ENCODE measurements at regions of chr7 and their contacts with region 1.

Region 1: DNA sequence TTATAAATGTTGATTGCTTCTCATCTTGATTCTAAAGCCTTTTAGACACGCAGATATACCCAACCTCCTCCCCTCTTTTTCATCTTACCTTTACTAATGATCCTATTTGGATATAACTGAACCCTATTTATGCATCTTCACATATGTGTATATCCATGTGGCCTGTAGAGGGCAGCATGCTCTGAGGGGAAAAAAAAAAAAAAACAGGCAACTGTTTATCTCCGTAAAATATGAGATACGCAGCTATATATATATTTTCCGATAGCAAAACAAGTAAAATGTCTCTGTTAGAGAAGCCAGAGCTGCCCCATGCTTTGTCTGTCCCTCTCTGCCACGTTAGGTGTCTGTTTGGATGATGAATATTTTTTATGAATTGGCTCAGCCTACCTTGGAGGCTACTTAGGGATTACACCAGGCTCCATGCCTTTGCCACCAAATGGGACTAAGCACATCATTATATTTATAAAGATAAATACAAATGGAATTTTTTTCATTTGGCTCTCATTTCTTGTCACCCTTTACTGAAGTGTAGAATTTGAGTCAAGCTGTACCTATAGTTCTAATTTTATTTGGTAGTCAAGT is 174.8 kb upstream of the FZD1 start:
- DNase-seq: peak in 1 of 2 donors; percentile 4
- H3K4me3 ChIP-seq: peak overlapping the region in 1 of 3 donors; percentile 19
- H3K27ac ChIP-seq: no peak overlapping the region
- H3K4me1 ChIP-seq: peaks cover 4 to 8% of the 10 kb centered on the region in 2 donors
- H3K27me3 ChIP-seq: no peaks in the 10 kb centered on the region
- CTCF ChIP-seq: peak; percentile 46 to 80 (median 64)
- POLR2A ChIP-seq: no peak

Region 2: GRCh38 chr7:91126762-91127161 is 37.3 kb after region 1 on chr7:
- intact Hi-C with region 1: no loop called
- DNase-seq: no peak
- H3K4me3 ChIP-seq: no peak overlapping the region
- H3K27ac ChIP-seq: no peak overlapping the region
- H3K4me1 ChIP-seq: no peaks in the 10 kb centered on the region
- H3K27me3 ChIP-seq: no peaks in the 10 kb centered on the region
- CTCF ChIP-seq: no peak
- POLR2A ChIP-seq: no peak

Region 3: DNA sequence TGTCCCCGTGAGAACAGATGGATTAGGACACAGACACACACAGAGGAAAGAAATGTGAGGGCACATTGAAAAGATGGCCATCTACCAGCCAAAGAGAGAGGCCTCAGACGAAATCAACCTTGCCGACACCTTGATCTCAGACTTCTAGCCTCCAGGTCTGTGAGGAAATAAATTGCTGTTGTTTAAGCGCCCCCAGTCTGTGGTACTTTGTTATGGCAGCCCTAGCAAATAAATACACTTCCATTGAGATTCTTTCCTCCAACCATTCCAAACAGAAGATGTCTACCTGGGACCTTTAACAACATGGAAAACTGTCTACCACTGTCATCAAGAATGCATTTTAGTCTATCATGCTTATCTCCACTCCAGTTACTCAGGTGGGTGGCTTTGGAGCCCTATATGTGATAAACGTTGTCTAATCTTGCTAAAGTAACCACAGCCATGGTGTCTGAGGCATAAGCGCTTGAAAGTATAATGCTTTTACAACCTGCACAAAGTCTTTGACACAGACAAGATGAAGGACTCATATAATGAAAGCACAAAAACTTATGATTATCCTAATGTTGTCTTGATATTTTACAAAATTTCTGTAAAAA is 546.8 kb after region 1 on chr7:
- intact Hi-C with region 1: loop called (anchors 10 kb)
- DNase-seq: peak; percentile 25
- H3K4me3 ChIP-seq: no peak overlapping the region
- H3K27ac ChIP-seq: no peak overlapping the region
- H3K4me1 ChIP-seq: peaks cover 0 to 2% of the 10 kb centered on the region in 2 donors
- H3K27me3 ChIP-seq: no peaks in the 10 kb centered on the region
- CTCF ChIP-seq: peak in 4 of 6 experiments; percentile 42 to 61 (median 53)
- POLR2A ChIP-seq: no peak